ENCODE measurements at regions of chr9 and their contacts with region 1.

Region 1: DNA sequence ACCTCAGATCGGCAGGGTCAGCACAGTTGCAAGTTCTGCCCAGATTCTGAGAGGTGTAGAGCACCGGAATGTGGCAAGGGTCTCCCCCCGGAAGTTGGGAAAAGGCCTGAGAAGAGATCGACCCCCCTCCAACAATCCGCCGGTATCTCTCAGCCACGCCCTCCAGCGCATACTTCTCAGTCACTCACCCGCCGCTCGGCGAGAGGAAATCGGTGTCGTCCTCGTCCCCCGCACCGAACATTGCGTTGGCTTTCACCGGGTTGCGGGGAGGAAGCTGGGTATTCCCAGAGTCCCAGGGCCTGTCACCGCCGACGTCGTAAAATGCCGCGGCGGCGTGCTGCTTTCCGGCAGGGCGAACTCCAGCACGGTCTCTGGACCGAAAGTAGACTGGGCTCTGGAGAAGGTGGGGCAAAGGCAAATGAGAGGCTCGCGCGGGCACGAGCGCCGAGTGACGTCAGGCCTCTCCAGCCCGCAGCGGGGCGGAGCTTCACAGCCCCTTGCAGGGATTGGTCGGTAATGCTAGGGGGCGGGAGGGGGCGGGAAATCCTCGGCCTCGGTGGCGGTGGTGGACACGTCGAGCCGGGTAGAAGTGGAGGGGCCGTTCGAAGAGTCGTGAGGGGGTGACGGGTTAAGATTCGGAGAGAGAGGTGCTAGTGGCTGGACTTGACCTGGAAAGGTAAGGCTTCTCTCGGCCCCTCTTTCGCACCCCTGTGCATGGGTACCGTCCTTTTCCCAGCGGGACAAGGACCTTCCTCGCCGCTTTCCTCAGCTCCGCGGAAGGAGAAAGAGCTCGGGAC is at the starts of genes FKBP15 and SLC31A1:
- DNase-seq: peak; percentile 88 to 96 (median 96)
- ATAC-seq: peak; percentile 99
- H3K4me3 ChIP-seq: peak within 1 kb of the TSS; percentile 91
- H3K4me3 Mint-ChIP-seq: peak within 1 kb of the TSS; percentile 89 to 99 (median 94)
- H3K27ac ChIP-seq: peak within 1 kb of the TSS; percentile 94
- H3K27ac Mint-ChIP-seq: peak within 1 kb of the TSS; percentile 86 to 98 (median 94)
- H3K4me1 ChIP-seq: peaks cover 10 to 25% of the 10 kb centered on the region in 2 donors
- H3K4me1 Mint-ChIP-seq: peaks cover 15 to 58% (median 48%) of the 10 kb centered on the region in 7 donors
- H3K27me3 ChIP-seq: no peaks in the 10 kb centered on the region
- H3K27me3 Mint-ChIP-seq: no peaks in the 10 kb centered on the region
- total RNA-seq, gene FKBP15: 22.4 to 50.6 (median 33.4) TPM
- total RNA-seq, gene SLC31A1: 4.5 to 10.4 (median 4.7) TPM

Region 2: DNA sequence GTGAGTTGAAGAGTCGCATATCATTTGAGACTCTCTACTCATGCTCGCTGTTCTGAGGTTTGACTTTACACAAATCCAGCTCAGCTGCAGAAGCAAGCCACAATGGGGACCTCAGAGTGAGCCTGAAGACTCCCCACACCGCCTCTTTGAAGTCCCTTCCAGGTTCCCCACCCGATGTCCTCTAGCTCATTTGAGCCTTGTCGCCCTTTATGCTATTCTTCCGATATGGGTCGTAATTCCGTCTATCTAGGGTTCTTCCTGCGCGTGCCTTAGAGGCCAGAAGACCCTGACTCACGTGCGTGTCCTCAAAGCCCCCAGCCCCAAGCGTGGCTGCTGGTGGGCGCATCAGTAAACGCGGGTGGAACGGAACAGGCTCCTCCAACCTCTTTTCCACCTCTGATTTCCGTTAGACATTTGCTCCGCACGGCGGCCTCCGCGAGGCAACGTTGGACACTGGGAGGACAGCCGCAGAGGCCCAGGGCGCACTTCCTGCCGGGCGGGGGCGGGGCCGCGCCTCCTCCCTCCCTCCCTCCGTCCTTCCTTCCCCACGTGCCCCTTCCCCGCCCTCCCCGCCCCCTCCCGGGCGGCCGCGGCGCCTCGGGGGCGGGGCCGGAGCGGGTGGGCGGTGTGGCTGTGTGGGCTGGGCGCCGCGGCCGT is 471.0 kb before region 1 on chr9 and contains the start of gene SNX30:
- CTCF ChIA-PET with region 1: no interaction called
- POLR2A ChIA-PET with region 1: no interaction called
- intact Hi-C with region 1: loop called in 1 of 2 experiments (anchors 1 kb)
- DNase-seq: peak; percentile 66 to 83 (median 75)
- ATAC-seq: peak; percentile 94
- H3K4me3 ChIP-seq: peak within 1 kb of the TSS; percentile 70
- H3K4me3 Mint-ChIP-seq: peak within 1 kb of the TSS; percentile 88 to 94 (median 92)
- H3K27ac ChIP-seq: peak within 1 kb of the TSS; percentile 68
- H3K27ac Mint-ChIP-seq: peak within 1 kb of the TSS; percentile 88 to 98 (median 96)
- H3K4me1 ChIP-seq: peaks cover 46% of the 10 kb centered on the region in 2 donors
- H3K4me1 Mint-ChIP-seq: peaks cover 39 to 66% (median 60%) of the 10 kb centered on the region in 7 donors
- H3K27me3 ChIP-seq: no peaks in the 10 kb centered on the region
- H3K27me3 Mint-ChIP-seq: peaks cover 0 to 4% (median 0%) of the 10 kb centered on the region in 5 donors
- total RNA-seq, gene SNX30: 6.6 to 15.8 (median 9.2) TPM

Region 3: DNA sequence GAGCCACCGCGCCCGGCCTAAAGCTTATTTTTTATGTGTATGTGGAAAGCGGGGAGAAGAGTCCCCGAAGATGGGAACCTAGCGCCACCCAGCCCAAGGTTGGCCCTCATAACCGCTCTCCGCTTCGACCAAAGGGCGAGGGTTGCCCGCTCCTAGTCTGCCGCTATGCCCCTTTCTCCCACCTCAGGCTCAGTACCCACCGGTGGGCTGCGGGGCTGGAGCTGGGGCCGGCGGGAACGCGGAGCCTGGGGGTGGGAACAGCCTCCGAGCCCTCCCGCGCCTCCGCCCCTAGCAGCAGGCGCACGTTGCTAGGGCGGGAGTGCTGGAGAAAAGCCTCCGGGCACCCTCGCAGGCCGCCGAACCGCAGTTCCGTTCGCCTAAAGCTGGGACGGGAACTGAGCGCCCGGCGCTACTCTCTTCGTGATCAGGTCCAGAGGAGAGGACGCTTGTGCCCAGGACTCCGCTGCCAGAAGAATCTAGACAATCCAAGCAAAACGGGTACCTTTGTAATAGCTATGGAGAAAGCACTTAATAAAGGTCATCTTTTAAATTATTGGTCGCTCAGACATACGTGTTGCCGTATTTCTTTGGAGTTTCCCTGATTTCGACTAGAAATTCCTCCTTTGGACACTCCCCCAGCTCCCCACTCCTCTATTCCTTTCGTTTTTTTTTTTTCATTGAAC is 119.0 kb after region 1 on chr9 and contains the start of gene WDR31:
- CTCF ChIA-PET with region 1: no interaction called
- POLR2A ChIA-PET with region 1: no interaction called
- intact Hi-C with region 1: loop called (anchors 1 to 5 kb)
- DNase-seq: peak; percentile 52 to 85 (median 75)
- ATAC-seq: peak; percentile 98
- H3K4me3 ChIP-seq: peak within 1 kb of the TSS; percentile 86
- H3K4me3 Mint-ChIP-seq: peak within 1 kb of the TSS; percentile 72 to 91 (median 88)
- H3K27ac ChIP-seq: peak within 1 kb of the TSS; percentile 62
- H3K27ac Mint-ChIP-seq: peak within 1 kb of the TSS; percentile 2 to 85 (median 62)
- H3K4me1 ChIP-seq: peaks cover 4 to 20% of the 10 kb centered on the region in 2 donors
- H3K4me1 Mint-ChIP-seq: peaks cover 12 to 54% (median 30%) of the 10 kb centered on the region in 7 donors
- H3K27me3 ChIP-seq: no peaks in the 10 kb centered on the region
- H3K27me3 Mint-ChIP-seq: peaks cover 0 to 7% (median 0%) of the 10 kb centered on the region in 5 donors
- total RNA-seq, gene WDR31: 0.27 to 1.7 (median 1.0) TPM

Region 4: DNA sequence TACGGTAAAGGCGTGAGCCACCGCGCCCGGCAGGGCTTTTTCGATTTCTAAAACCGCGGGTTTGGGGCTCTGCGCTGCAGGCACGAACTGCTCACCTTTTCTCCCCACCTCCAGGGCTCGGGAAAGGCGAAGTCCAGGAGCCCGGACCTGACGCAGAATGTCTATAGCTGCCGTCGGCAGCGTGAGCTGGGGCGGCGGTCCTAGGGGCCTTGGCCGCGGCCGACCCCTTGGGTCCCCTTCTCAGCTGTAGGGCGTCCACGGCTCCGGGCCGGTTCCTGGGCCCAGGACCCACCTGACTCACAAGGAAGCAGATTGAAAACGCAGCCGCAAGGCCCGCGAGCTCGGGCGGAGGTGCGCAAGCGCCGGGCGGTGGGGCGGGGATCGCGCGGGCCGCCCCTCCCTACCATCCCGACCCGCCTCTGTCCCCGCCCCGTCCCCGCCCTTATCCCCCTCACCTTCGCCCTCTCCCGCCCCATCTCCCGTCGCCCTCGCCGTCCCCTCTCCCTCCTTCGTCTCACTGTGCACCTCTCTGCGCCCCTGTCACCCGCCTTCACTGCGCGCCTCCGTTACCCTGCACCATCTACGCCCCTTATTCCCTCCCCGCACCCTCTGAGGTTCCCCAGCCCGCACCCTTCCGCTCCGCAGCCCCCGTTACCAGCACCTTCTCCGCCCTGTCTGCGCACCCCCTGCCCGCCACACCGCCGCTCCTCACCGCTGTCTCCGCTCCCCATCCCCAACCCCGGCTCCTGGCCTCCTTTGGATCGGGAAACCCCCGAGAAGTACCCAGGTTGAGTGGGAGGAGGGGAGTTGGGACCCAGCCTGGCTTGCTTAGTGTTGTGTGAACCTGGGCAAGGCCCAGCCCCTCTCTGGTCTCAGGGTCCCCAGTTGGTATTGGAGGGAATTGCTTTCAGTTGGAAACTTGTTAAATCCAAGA is 155.7 kb after region 1 on chr9 and contains the start of gene HDHD3:
- CTCF ChIA-PET with region 1: no interaction called
- POLR2A ChIA-PET with region 1: no interaction called
- intact Hi-C with region 1: loop called in 1 of 2 experiments (anchors 1 kb)
- DNase-seq: peak; percentile 70 to 84 (median 81)
- ATAC-seq: peak; percentile 96
- H3K4me3 ChIP-seq: peak within 1 kb of the TSS; percentile 81
- H3K4me3 Mint-ChIP-seq: peak within 1 kb of the TSS; percentile 82 to 98 (median 90)
- H3K27ac ChIP-seq: peak within 1 kb of the TSS; percentile 94
- H3K27ac Mint-ChIP-seq: peak within 1 kb of the TSS; percentile 68 to 97 (median 85)
- H3K4me1 ChIP-seq: peaks cover 0 to 7% of the 10 kb centered on the region in 2 donors
- H3K4me1 Mint-ChIP-seq: peaks cover 14 to 17% (median 16%) of the 10 kb centered on the region in 7 donors
- H3K27me3 ChIP-seq: no peaks in the 10 kb centered on the region
- H3K27me3 Mint-ChIP-seq: peaks cover 0 to 3% (median 0%) of the 10 kb centered on the region in 5 donors
- total RNA-seq, gene HDHD3: 11.3 to 32.2 (median 20.5) TPM

Measured in naive thymus-derived CD4-positive, alpha-beta T cell (primary cell).